ENCODE measurements at regions of chr6 and their contacts with region 1.

Region 1: DNA sequence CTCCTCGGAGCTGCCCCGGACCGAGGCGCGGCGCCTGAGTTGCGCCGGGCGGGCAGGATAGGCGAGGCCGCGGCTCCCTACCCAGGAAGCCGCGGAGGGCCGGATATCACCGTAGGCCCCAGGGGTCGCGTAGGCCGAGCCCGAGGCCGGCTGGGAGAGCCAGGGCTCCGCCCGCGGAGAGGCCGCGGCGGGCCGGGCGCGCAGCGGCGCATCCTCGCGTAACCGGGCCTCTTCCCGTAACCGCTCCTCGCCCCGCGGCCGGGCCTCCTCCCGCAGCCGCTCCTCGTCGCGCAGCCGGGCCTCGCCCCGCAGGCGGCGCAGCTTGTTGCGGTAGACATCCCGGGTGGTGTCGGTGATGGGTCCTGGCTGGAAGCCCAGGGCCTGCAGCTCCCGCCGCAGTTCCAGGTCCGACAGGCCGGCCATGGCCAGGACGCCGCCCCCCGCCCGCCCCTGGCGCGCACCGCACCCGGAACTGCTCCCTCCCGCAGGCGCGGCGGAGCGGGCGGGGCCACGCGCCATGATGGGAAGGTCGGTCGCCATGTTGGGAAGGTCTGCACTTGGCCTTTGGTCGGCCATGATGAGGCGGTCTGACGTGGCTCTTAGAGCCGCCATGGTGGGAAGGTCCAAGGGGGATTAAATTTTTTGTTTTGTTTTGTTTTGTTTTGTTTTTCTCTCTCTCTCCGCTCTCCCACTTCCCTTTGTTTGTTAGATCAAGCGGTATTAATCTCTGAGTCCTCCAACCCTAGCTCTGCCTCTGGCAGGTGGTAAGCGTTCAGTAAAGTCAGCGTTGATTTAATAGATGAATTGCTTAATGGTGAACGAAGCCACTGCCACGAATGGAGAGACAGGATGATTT is at the start of gene LEMD2:
- DNase-seq: peak; percentile 81 to 96 (median 92)
- ATAC-seq: peak; percentile 88
- H3K4me3 ChIP-seq: peak within 1 kb of the TSS; percentile 53
- H3K4me3 Mint-ChIP-seq: peak within 1 kb of the TSS; percentile 94
- H3K27ac ChIP-seq: peak within 1 kb of the TSS; percentile 50 to 87
- H3K27ac Mint-ChIP-seq: peak within 1 kb of the TSS; percentile 94
- H3K4me1 ChIP-seq: peaks cover 45% of the 10 kb centered on the region
- H3K4me1 Mint-ChIP-seq: peaks cover 47% of the 10 kb centered on the region
- H3K27me3 ChIP-seq: no peaks in the 10 kb centered on the region
- H3K27me3 Mint-ChIP-seq: no peaks in the 10 kb centered on the region
- CTCF ChIP-seq: no peak
- total RNA-seq, gene LEMD2: 122 to 124 TPM

Region 2: GRCh38 chr6:33579828-33580714 is 208.9 kb before region 1 on chr6 and contains the start of gene BAK1:
- CTCF ChIA-PET with region 1: no interaction called
- POLR2A ChIA-PET with region 1: interaction called, 10 read pairs
- intact Hi-C with region 1: no loop called
- DNase-seq: peak; percentile 64 to 92 (median 78)
- ATAC-seq: peak; percentile 93
- H3K4me3 ChIP-seq: peak within 1 kb of the TSS; percentile 99
- H3K4me3 Mint-ChIP-seq: peak within 1 kb of the TSS; percentile 96
- H3K27ac ChIP-seq: peak within 1 kb of the TSS; percentile 82 to 88
- H3K27ac Mint-ChIP-seq: peak within 1 kb of the TSS; percentile 97
- H3K4me1 ChIP-seq: peaks cover 51% of the 10 kb centered on the region
- H3K4me1 Mint-ChIP-seq: peaks cover 44% of the 10 kb centered on the region
- H3K27me3 ChIP-seq: no peaks in the 10 kb centered on the region
- H3K27me3 Mint-ChIP-seq: no peaks in the 10 kb centered on the region
- CTCF ChIP-seq: peak; percentile 63
- total RNA-seq, gene BAK1: 38.3 to 40.8 TPM

Region 3: GRCh38 chr6:33711140-33712129 is 77.5 kb before region 1 on chr6 and contains the start of gene UQCC2:
- CTCF ChIA-PET with region 1: interaction called, 9 read pairs
- POLR2A ChIA-PET with region 1: interaction called, 3 read pairs
- intact Hi-C with region 1: loop called in 1 of 2 experiments (anchors 1 kb)
- DNase-seq: peak; percentile 93 to 99 (median 97)
- ATAC-seq: peak; percentile 97
- H3K4me3 ChIP-seq: peak within 1 kb of the TSS; percentile 72
- H3K4me3 Mint-ChIP-seq: peak within 1 kb of the TSS; percentile 100
- H3K27ac ChIP-seq: peak within 1 kb of the TSS; percentile 84 to 90
- H3K27ac Mint-ChIP-seq: peak within 1 kb of the TSS; percentile 97
- H3K4me1 ChIP-seq: peaks cover 27% of the 10 kb centered on the region
- H3K4me1 Mint-ChIP-seq: peaks cover 31% of the 10 kb centered on the region
- H3K27me3 ChIP-seq: no peaks in the 10 kb centered on the region
- H3K27me3 Mint-ChIP-seq: no peaks in the 10 kb centered on the region
- CTCF ChIP-seq: peak; percentile 80
- total RNA-seq, gene UQCC2: 8.7 to 9.3 TPM

Region 4: DNA sequence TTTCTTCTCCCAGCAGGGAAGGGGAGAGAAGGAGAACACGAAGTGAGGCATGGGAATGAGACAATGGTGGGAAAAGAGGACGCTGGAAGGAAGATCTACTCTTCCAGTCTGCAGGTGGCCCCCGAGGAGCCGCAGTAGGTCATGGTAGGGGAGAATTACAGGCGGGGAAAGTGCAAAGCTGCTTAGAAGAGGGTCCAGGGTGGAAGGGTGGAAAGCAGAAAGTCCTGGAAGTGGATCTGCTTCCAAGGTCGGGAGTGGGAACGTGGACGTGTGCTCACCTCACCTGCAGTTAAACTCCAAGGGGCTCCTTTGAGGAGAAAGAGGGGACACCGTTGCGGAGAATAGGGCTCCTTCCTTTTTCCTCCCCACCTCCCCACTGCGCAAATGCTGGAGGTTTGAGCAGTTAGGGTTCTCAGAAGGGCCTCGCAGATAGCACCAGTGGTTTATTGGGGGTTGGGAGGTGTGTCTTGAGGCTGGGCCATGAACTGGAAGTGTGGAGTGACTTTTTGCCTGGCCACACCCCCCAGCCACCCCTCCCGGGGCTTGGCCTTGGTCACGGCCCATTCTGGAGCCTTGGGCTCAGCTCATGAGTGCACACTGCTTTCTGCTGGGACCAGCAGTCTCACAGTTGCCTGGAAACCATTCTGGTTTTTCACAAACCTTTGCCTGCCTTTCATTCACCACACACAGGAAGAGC is 115.3 kb after region 1 on chr6:
- CTCF ChIA-PET with region 1: no interaction called
- POLR2A ChIA-PET with region 1: interaction called, 14 read pairs
- intact Hi-C with region 1: loop called (anchors 5 to 10 kb)
- DNase-seq: peak; percentile 40 to 89 (median 62)
- ATAC-seq: peak; percentile 82
- H3K4me3 ChIP-seq: peak overlapping the region; percentile 19
- H3K4me3 Mint-ChIP-seq: peak overlapping the region; percentile 43
- H3K27ac ChIP-seq: peak overlapping the region; percentile 62 to 72
- H3K27ac Mint-ChIP-seq: peak overlapping the region; percentile 85
- H3K4me1 ChIP-seq: peaks cover 70% of the 10 kb centered on the region
- H3K4me1 Mint-ChIP-seq: peaks cover 81% of the 10 kb centered on the region
- H3K27me3 ChIP-seq: no peaks in the 10 kb centered on the region
- H3K27me3 Mint-ChIP-seq: no peaks in the 10 kb centered on the region
- CTCF ChIP-seq: no peak

Region 5: GRCh38 chr6:34526992-34527728 is 738.2 kb after region 1 on chr6:
- CTCF ChIA-PET with region 1: no interaction called
- POLR2A ChIA-PET with region 1: no interaction called
- intact Hi-C with region 1: loop called in 1 of 2 experiments (anchors 10 kb)
- DNase-seq: peak; percentile 94 to 99 (median 97)
- ATAC-seq: peak; percentile 98
- H3K4me3 ChIP-seq: peak overlapping the region; percentile 26
- H3K4me3 Mint-ChIP-seq: peak overlapping the region; percentile 54
- H3K27ac ChIP-seq: no peak overlapping the region
- H3K27ac Mint-ChIP-seq: peak overlapping the region; percentile 75
- H3K4me1 ChIP-seq: peaks cover 15% of the 10 kb centered on the region
- H3K4me1 Mint-ChIP-seq: peaks cover 11% of the 10 kb centered on the region
- H3K27me3 ChIP-seq: no peaks in the 10 kb centered on the region
- H3K27me3 Mint-ChIP-seq: no peaks in the 10 kb centered on the region
- CTCF ChIP-seq: peak; percentile 78

Measured in CD4-positive, alpha-beta T cell (primary cell).